Caco-2 (cell line): ENCODE measurements at regions of chr21 and their contacts with region 1.

Region 1: DNA sequence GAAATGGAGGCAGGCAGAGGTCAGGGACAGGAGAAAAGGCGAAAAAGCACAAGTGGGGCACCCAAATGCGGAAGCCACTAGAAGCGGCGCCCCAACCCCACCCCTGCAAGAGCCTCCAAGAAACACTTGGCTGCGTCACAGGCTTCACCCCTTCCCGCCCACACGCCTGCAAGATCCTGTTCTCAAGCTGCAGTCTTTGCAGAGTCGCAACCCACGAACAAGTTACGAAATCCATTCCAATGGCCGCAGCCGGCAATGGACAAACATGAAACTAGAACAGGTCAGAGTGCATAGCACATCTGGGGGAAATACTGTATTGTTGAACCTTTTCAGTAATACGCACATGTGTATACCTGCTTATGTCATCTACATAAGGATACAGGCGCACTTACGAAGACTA is 103.6 kb downstream of the PSMG1 start:
- DNase-seq: no peak
- H3K4me3 ChIP-seq: no peak overlapping the region
- H3K4me3 Mint-ChIP-seq: no peak overlapping the region
- H3K27ac Mint-ChIP-seq: peak overlapping the region; percentile 19
- H3K4me1 ChIP-seq: no peaks in the 10 kb centered on the region; the same call in 1 of the 2 replicates
- H3K4me1 Mint-ChIP-seq: peaks cover 16% of the 10 kb centered on the region
- H3K27me3 ChIP-seq: no peaks in the 10 kb centered on the region
- H3K27me3 Mint-ChIP-seq: no peaks in the 10 kb centered on the region
- CTCF ChIP-seq: no peak

Region 2: DNA sequence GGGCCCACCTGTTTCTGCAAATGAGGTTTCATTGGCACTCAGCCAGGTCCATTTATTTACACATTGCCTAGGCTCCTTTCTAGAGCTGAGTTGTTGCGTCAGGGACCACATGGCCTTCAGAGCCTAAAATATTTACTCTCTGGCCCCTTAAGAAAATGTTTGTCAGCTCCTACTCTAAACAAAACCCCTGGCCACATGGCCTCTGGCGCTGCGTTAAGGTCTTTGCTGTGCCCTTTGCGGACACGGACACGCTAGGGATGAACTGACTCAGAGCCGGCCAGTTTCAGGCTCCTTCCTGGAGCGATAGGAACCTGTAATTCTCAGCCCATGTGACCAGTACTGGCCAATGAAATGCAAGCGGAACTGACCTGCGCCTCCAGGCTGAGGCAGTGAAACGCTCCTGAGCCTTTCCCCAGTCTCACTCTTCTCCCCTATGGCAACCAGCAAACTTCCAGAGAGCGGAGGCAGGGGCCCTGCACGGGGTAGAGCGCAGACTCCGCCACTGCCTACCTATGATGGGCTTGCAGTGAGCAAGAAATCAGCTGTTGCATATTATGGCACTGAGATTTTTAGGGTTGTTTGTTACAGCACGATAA is 113.6 kb before region 1 on chr21:
- CTCF ChIA-PET with region 1: no interaction called
- POLR2A ChIA-PET with region 1: interaction called, 16 read pairs
- intact Hi-C with region 1: loop called (anchors 5 kb)
- DNase-seq: peak; percentile 89 to 95
- H3K4me3 ChIP-seq: no peak overlapping the region
- H3K4me3 Mint-ChIP-seq: peak overlapping the region; percentile 59
- H3K27ac Mint-ChIP-seq: peak overlapping the region; percentile 90
- H3K4me1 ChIP-seq: peaks cover 20% of the 10 kb centered on the region
- H3K4me1 Mint-ChIP-seq: peaks cover 21% of the 10 kb centered on the region
- H3K27me3 ChIP-seq: no peaks in the 10 kb centered on the region
- H3K27me3 Mint-ChIP-seq: no peaks in the 10 kb centered on the region
- CTCF ChIP-seq: no peak

Region 3: GRCh38 chr21:39004634-39005501 is 74.7 kb before region 1 on chr21:
- CTCF ChIA-PET with region 1: no interaction called
- POLR2A ChIA-PET with region 1: no interaction called
- intact Hi-C with region 1: no loop called
- DNase-seq: no peak
- H3K4me3 ChIP-seq: no peak overlapping the region
- H3K4me3 Mint-ChIP-seq: no peak overlapping the region
- H3K27ac Mint-ChIP-seq: no peak overlapping the region
- H3K4me1 ChIP-seq: no peaks in the 10 kb centered on the region
- H3K4me1 Mint-ChIP-seq: peaks cover 8% of the 10 kb centered on the region
- H3K27me3 ChIP-seq: no peaks in the 10 kb centered on the region
- H3K27me3 Mint-ChIP-seq: no peaks in the 10 kb centered on the region
- CTCF ChIP-seq: no peak

Region 4: DNA sequence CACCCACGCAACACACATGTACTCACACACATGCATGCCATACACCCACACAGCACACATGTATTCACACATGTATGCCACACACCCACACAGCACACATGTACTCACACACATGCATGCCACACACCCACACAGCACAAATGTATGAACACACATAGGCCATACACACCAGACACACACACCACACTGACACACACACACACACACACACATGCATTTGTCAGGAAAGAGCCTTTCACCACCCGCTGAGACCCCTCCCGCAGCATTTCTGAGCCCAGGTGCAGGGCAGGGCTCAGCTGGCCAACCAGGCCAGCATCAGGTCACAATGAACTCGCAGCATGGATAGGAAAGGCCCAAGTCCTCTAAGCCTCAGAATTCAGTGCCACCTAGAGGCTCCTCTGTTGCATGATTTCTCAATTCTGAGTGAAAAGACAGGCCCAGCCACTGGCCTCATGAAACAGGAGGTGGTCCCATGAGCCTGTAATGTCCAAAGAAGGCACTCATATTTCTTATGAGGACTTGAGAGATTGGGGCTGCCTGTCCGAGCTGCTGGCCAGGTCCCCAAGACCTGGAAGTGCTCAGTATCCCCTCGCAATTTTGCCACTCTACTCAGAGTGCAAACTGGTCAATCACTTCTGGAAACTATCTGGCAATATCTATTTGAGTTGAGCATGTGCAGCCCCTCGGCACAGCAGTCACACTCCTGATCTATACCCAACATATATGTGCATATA is 46.3 kb after region 1 on chr21:
- CTCF ChIA-PET with region 1: no interaction called
- POLR2A ChIA-PET with region 1: no interaction called
- intact Hi-C with region 1: loop called (anchors 5 kb)
- DNase-seq: peak; percentile 57 to 66
- H3K4me3 ChIP-seq: no peak overlapping the region
- H3K4me3 Mint-ChIP-seq: no peak overlapping the region
- H3K27ac Mint-ChIP-seq: no peak overlapping the region
- H3K4me1 ChIP-seq: no peaks in the 10 kb centered on the region
- H3K4me1 Mint-ChIP-seq: peaks cover 7% of the 10 kb centered on the region
- H3K27me3 ChIP-seq: no peaks in the 10 kb centered on the region
- H3K27me3 Mint-ChIP-seq: no peaks in the 10 kb centered on the region
- CTCF ChIP-seq: peak; percentile 44 to 68

Region 5: DNA sequence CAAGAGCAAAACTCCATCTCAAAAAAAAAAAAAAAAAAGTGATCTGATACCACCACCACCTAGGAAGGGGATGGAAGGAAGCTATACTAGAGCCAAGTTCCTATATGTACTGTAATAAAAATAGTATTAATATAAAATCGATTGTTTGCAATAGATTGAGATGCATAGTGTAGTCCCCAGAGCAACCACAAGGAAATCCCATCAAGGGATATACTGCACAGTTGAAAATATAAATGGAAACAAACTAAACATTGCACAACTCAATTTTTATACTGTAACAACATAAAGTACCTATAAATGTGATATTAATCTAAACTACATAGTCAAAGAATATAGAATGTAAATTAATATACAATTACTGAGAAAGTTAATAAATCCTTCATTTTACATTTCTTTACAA is 124.5 kb after region 1 on chr21:
- CTCF ChIA-PET with region 1: no interaction called
- POLR2A ChIA-PET with region 1: no interaction called
- intact Hi-C with region 1: no loop called
- DNase-seq: no peak
- H3K4me3 ChIP-seq: no peak overlapping the region
- H3K4me3 Mint-ChIP-seq: no peak overlapping the region
- H3K27ac Mint-ChIP-seq: no peak overlapping the region
- H3K4me1 ChIP-seq: peaks cover 8% of the 10 kb centered on the region
- H3K4me1 Mint-ChIP-seq: peaks cover 7% of the 10 kb centered on the region
- H3K27me3 ChIP-seq: no peaks in the 10 kb centered on the region
- H3K27me3 Mint-ChIP-seq: no peaks in the 10 kb centered on the region
- CTCF ChIP-seq: no peak